ENCODE measurements at regions of chr13 and their contacts with region 1.

Region 1: GRCh38 chr13:52450012-52450792 is at the start of gene VPS36:
- DNase-seq: peak; percentile 51
- H3K4me3 ChIP-seq: peak within 1 kb of the TSS; percentile 86
- CTCF ChIP-seq: peak; percentile 92

Region 2: GRCh38 chr13:52194184-52194868 is 255.9 kb before region 1 on chr13:
- CTCF ChIA-PET with region 1: interaction called, 18 read pairs
- POLR2A ChIA-PET with region 1: interaction called, 6 read pairs
- DNase-seq: peak; percentile 17
- H3K4me3 ChIP-seq: peak overlapping the region; percentile 92
- CTCF ChIP-seq: no peak

Region 3: DNA sequence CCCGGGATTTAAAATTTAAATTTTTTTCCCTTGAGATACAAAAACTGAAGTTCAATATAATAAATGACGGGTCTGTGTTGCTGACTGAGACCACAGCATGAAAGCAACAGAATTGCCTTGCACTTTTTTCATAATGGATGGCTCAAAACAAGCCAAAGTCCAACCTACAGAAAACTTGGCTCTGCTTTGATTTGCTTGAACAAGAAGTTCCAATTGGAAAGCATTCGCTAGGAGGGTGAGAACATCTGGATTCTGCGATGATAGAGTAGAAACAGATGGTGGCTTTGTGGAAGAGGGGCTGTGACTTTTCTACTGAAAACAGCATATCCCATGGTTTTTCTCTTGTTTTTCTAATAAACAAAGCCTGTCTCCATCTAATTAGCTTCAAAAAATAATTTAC is 90.7 kb before region 1 on chr13:
- CTCF ChIA-PET with region 1: interaction called, 13 read pairs
- POLR2A ChIA-PET with region 1: no interaction called
- DNase-seq: no peak
- H3K4me3 ChIP-seq: no peak overlapping the region
- CTCF ChIP-seq: no peak

Region 4: DNA sequence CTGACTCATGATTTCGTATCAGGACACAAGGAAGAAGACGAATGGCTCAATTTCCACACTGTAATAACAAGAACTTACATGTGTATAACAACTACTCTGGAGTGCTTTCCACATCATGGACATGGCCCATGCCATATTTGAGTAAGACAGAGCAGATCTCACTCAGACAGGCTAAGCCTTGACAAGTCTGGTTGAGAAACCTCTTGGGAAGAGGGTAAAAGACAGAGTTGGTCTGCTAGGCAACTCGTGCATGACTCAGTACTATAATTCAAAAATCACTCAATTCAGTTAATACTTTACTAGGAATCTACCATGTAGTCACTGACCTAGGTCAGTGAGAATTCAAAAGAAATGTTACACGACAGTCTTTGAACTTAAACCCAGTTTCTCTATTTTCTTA is 38.6 kb before region 1 on chr13:
- CTCF ChIA-PET with region 1: interaction called, 25 read pairs
- POLR2A ChIA-PET with region 1: no interaction called
- DNase-seq: peak; percentile 45
- H3K4me3 ChIP-seq: no peak overlapping the region
- CTCF ChIP-seq: no peak

Region 5: DNA sequence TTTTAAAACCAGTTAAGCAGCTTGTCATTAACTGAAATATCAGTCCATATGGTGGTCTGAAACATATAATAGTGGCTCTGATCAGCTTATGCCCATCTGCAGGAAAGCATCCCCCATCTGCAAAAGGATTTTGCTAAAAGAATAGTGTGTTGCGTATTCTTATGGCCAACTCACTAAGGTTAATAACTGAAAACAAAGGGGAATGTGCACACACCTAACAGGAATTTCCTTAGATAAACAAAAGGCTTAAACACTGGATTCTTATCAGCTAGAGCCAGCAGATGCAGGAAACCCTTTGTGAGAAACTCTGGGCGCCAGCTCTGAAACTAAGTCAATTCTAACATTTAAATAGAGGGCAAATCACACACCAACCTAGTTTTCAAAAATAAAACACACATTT is 21.9 kb before region 1 on chr13:
- CTCF ChIA-PET with region 1: interaction called, 64 read pairs
- POLR2A ChIA-PET with region 1: interaction called, 4 read pairs
- DNase-seq: no peak
- H3K4me3 ChIP-seq: no peak overlapping the region
- CTCF ChIP-seq: no peak

Region 6: DNA sequence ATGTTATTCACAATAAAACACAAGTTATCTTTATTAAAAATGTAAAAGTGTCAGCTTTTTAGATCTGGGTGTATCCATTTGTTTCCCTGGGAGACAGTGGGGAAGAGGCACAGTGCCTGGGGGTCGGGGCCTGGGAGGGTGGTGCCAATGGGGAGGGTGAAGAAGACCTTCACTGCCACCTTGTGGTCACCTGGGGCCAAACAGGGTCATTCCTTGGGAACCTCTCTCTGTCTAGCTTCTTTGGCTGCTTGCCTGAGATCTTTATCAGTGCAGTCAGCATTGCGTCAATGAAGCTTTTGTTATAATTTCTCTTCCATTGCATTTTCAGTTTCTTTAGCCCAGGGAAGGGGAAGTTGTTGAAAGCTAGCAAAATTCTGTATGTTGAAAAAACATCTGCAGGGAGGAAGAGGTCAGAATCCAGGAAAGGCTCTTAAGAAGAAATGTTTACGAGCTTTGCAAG is 359.1 kb after region 1 on chr13:
- CTCF ChIA-PET with region 1: no interaction called
- POLR2A ChIA-PET with region 1: no interaction called
- DNase-seq: no peak
- H3K4me3 ChIP-seq: no peak overlapping the region
- CTCF ChIP-seq: peak; percentile 19

Measured in AG04449 (cell line).